Endothelial cell of umbilical vein (primary cell): ENCODE measurements at regions of chr10 and their contacts with region 1.

Region 1: GRCh38 chr10:13787015-13787421 is 200.3 kb downstream of the PRPF18 start:
- DNase-seq: peak; percentile 94
- H3K4me3 ChIP-seq: no peak overlapping the region
- H3K27ac ChIP-seq: peak overlapping the region; percentile 96
- H3K4me1 ChIP-seq: peaks cover 57% of the 10 kb centered on the region
- H3K27me3 ChIP-seq: no peaks in the 10 kb centered on the region
- CTCF ChIP-seq: no peak
- POLR2A ChIP-seq: peak; percentile 48

Region 2: GRCh38 chr10:13865758-13866491 is 78.9 kb after region 1 on chr10:
- CTCF ChIA-PET with region 1: interaction called, 5 read pairs
- POLR2A ChIA-PET with region 1: no interaction called
- dilution Hi-C with region 1: no loop called
- intact Hi-C with region 1: loop called (anchors 2 kb)
- DNase-seq: peak; percentile 89
- H3K4me3 ChIP-seq: peak overlapping the region in 1 of 3 experiments; percentile 37
- H3K27ac ChIP-seq: peak overlapping the region; percentile 96
- H3K4me1 ChIP-seq: peaks cover 64% of the 10 kb centered on the region
- H3K27me3 ChIP-seq: no peaks in the 10 kb centered on the region
- CTCF ChIP-seq: no peak
- POLR2A ChIP-seq: no peak

Region 3: DNA sequence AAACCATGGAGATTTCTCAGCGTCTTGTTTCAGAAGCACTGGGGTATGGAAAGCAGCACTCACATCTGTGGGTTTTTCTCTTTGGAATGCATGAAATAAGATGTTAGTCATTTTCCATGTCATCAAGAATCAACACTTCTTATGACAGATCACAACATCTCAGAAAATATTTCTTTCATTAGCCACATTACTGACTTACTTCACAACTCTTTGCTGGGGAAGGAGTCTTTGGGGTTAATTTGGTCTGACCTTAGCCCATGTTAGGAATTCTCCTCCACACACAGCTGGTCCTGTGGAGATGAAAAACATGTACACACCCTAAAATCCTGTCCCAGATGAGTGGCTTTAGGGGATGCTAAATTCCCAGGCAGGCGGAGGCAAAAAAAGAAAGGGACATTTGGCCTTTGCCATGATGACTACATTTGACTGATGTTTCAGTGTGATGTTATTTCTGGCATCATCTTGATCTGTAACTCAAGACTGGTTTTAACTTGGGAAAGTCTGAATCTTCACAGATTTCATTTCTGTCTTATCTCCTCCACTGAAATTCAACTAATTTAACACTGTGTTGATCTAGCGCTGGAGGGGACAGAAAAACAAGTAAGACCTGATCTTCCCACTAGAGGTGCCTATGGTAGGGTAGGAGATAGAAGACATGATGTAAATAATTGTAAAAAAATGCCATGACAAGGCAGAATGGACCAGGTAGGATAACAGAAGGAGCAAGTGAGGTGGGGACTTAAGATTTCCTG is 163.0 kb after region 1 on chr10:
- CTCF ChIA-PET with region 1: interaction called, 7 read pairs
- POLR2A ChIA-PET with region 1: no interaction called
- dilution Hi-C with region 1: no loop called
- intact Hi-C with region 1: loop called (anchors 1 kb)
- DNase-seq: peak; percentile 22
- H3K4me3 ChIP-seq: no peak overlapping the region
- H3K27ac ChIP-seq: no peak overlapping the region
- H3K4me1 ChIP-seq: peaks cover 33% of the 10 kb centered on the region
- H3K27me3 ChIP-seq: no peaks in the 10 kb centered on the region
- CTCF ChIP-seq: no peak
- POLR2A ChIP-seq: no peak

Region 4: GRCh38 chr10:14032395-14032998 is 245.5 kb after region 1 on chr10:
- CTCF ChIA-PET with region 1: interaction called, 4 read pairs
- POLR2A ChIA-PET with region 1: no interaction called
- dilution Hi-C with region 1: no loop called
- intact Hi-C with region 1: loop called (anchors 5 kb)
- DNase-seq: peak; percentile 41
- H3K4me3 ChIP-seq: no peak overlapping the region
- H3K27ac ChIP-seq: no peak overlapping the region
- H3K4me1 ChIP-seq: peaks cover 14% of the 10 kb centered on the region
- H3K27me3 ChIP-seq: no peaks in the 10 kb centered on the region
- CTCF ChIP-seq: peak; percentile 89 to 93
- POLR2A ChIP-seq: no peak

Region 5: GRCh38 chr10:14185316-14186045 is 398.5 kb after region 1 on chr10:
- CTCF ChIA-PET with region 1: interaction called, 3 read pairs
- POLR2A ChIA-PET with region 1: interaction called, 9 read pairs
- dilution Hi-C with region 1: no loop called
- intact Hi-C with region 1: loop called (anchors 2 kb)
- DNase-seq: peak; percentile 33
- H3K4me3 ChIP-seq: no peak overlapping the region
- H3K27ac ChIP-seq: no peak overlapping the region
- H3K4me1 ChIP-seq: no peaks in the 10 kb centered on the region
- H3K27me3 ChIP-seq: peaks cover 24 to 39% of the 10 kb centered on the region in 2 experiments
- CTCF ChIP-seq: no peak
- POLR2A ChIP-seq: peak; percentile 99